ENCODE measurements at regions of chr10 and their contacts with region 1.

Region 1: DNA sequence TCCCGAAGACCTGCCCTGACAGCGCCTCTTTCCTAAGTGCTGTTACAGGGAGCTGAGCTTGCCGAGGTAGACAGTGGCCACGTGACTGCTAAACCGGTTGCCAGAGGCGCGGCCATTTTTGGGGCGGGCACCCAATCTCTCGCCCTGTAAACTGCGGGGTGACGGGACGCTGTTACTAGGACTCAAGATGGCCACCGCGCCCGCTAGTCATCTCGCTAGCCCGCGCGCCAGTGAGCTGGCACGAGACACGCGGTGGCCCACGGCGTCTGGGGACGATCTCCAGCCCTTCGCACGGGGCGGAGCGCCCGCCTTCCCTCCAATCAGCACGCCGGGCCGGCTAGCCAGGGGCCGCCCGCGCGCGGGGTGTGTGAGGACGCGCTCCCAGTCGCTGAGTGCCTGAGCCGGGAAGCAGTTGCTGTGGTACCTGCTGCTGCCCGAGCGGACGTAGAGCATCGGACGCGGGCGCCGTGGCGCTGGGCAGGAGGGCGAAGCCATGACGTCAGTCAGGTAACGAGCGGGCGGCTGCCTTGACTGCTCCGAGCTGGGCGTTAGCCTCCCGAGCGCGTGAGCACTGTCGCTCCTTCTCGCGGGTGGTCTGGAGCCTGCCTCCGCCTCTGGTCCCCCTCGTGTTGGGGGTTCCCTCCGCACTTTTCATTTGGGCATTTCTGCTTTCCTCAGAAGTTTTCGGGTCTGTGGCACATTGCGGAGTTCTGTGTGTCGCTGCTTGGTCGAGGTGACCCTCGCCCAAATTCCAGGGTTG is 25.5 kb downstream of the ADK start:
- DNase-seq: peak; percentile 90 to 99 (median 96)
- ATAC-seq: peak; percentile 93 to 96 (median 95)
- H3K4me3 ChIP-seq: peak overlapping the region; percentile 94 to 96
- H3K4me3 Mint-ChIP-seq: peak overlapping the region; percentile 88 to 94 (median 93)
- H3K27ac ChIP-seq: peak overlapping the region; percentile 89
- H3K27ac Mint-ChIP-seq: peak overlapping the region; percentile 96 to 98
- H3K4me1 ChIP-seq: peaks cover 7 to 18% of the 10 kb centered on the region in 2 experiments
- H3K4me1 Mint-ChIP-seq: peaks cover 35 to 44% (median 43%) of the 10 kb centered on the region in 3 donors
- H3K27me3 ChIP-seq: no peaks in the 10 kb centered on the region
- H3K27me3 Mint-ChIP-seq: no peaks in the 10 kb centered on the region

Region 2: GRCh38 chr10:74084955-74085354 is 91.6 kb before region 1 on chr10:
- CTCF ChIA-PET with region 1: no interaction called
- POLR2A ChIA-PET with region 1: no interaction called
- DNase-seq: no peak
- ATAC-seq: no peak
- H3K4me3 ChIP-seq: no peak overlapping the region
- H3K4me3 Mint-ChIP-seq: no peak overlapping the region
- H3K27ac ChIP-seq: no peak overlapping the region
- H3K27ac Mint-ChIP-seq: no peak overlapping the region
- H3K4me1 ChIP-seq: no peaks in the 10 kb centered on the region
- H3K4me1 Mint-ChIP-seq: peaks cover 0 to 10% (median 6%) of the 10 kb centered on the region in 3 donors
- H3K27me3 ChIP-seq: no peaks in the 10 kb centered on the region
- H3K27me3 Mint-ChIP-seq: no peaks in the 10 kb centered on the region

Region 3: DNA sequence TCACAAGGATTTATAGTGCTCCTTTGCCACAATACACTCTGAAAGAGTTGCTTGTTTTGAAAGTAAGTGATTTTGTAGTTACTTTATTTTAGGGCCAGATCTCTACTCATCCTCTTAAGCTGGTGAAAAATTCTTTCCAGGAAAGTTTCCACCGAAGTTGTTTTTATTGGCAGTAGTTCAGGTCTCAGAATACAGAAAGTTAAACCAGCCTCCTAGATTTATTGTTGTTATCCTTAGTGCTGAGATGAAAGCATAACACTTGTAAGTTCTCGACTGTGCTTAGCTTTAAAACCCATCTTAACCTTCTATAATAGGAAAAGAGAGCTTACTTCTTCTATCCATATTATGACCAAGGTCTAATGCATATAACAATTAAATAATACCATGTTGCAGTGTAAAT is 31.4 kb before region 1 on chr10:
- CTCF ChIA-PET with region 1: interaction called in 1 of 2 experiments, 4 read pairs
- POLR2A ChIA-PET with region 1: interaction called, 5 to 19 read pairs
- DNase-seq: no peak
- ATAC-seq: no peak
- H3K4me3 ChIP-seq: no peak overlapping the region
- H3K4me3 Mint-ChIP-seq: no peak overlapping the region
- H3K27ac ChIP-seq: no peak overlapping the region
- H3K27ac Mint-ChIP-seq: no peak overlapping the region
- H3K4me1 ChIP-seq: peaks cover 10 to 18% of the 10 kb centered on the region in 2 experiments
- H3K4me1 Mint-ChIP-seq: peaks cover 45 to 46% (median 45%) of the 10 kb centered on the region in 3 donors
- H3K27me3 ChIP-seq: no peaks in the 10 kb centered on the region
- H3K27me3 Mint-ChIP-seq: no peaks in the 10 kb centered on the region

Region 4: DNA sequence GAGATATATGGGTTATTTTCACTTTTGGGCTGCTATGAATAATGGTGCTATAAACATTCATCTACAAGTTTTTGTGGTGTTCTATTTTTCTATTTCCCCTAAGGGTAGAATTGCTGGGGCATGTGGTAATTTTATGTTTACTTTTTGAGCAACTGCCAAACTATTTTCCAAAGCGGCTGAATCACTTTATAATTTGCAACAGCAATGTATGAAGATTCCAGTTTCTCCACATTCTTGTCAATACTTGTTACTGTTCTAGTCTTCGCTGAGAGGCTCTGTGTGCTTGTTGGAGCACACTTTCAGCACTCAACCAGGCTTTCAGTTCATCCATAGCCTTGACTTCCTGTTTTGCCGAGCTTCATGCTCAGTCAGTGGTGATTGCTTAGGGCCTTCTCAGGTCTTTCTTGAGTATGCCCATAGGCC is 13.4 kb after region 1 on chr10:
- CTCF ChIA-PET with region 1: interaction called in 1 of 2 experiments, 7 read pairs
- POLR2A ChIA-PET with region 1: interaction called, 7 to 11 read pairs
- DNase-seq: peak in 20 of 35 experiments; percentile 6 to 61 (median 20)
- ATAC-seq: peak; percentile 66 to 94 (median 90)
- H3K4me3 ChIP-seq: no peak overlapping the region
- H3K4me3 Mint-ChIP-seq: peak overlapping the region; percentile 52 to 74 (median 55)
- H3K27ac ChIP-seq: peak overlapping the region; percentile 69
- H3K27ac Mint-ChIP-seq: peak overlapping the region; percentile 98 to 99
- H3K4me1 ChIP-seq: peaks cover 13 to 16% of the 10 kb centered on the region in 2 experiments
- H3K4me1 Mint-ChIP-seq: peaks cover 55 to 74% (median 65%) of the 10 kb centered on the region in 3 donors
- H3K27me3 ChIP-seq: no peaks in the 10 kb centered on the region
- H3K27me3 Mint-ChIP-seq: no peaks in the 10 kb centered on the region

Region 5: GRCh38 chr10:75294866-75295701 is 1118.5 kb after region 1 on chr10:
- CTCF ChIA-PET with region 1: no interaction called
- POLR2A ChIA-PET with region 1: no interaction called
- DNase-seq: peak; percentile 20 to 66 (median 48)
- ATAC-seq: peak; percentile 84 to 89 (median 88)
- H3K4me3 ChIP-seq: peak overlapping the region; percentile 32 to 60
- H3K4me3 Mint-ChIP-seq: peak overlapping the region in 2 of 3 donors; percentile 78 to 82
- H3K27ac ChIP-seq: no peak overlapping the region
- H3K27ac Mint-ChIP-seq: peak overlapping the region in 1 of 2 donors; percentile 74
- H3K4me1 ChIP-seq: peaks cover 0 to 7% of the 10 kb centered on the region in 2 experiments
- H3K4me1 Mint-ChIP-seq: peaks cover 4 to 6% (median 5%) of the 10 kb centered on the region in 3 donors
- H3K27me3 ChIP-seq: peaks cover 0 to 41% of the 10 kb centered on the region in 2 experiments
- H3K27me3 Mint-ChIP-seq: peaks cover 13 to 14% of the 10 kb centered on the region in 2 donors

Measured in T-cell (primary cell).